ENCODE measurements at regions of chr9 and their contacts with region 1.

Region 1: DNA sequence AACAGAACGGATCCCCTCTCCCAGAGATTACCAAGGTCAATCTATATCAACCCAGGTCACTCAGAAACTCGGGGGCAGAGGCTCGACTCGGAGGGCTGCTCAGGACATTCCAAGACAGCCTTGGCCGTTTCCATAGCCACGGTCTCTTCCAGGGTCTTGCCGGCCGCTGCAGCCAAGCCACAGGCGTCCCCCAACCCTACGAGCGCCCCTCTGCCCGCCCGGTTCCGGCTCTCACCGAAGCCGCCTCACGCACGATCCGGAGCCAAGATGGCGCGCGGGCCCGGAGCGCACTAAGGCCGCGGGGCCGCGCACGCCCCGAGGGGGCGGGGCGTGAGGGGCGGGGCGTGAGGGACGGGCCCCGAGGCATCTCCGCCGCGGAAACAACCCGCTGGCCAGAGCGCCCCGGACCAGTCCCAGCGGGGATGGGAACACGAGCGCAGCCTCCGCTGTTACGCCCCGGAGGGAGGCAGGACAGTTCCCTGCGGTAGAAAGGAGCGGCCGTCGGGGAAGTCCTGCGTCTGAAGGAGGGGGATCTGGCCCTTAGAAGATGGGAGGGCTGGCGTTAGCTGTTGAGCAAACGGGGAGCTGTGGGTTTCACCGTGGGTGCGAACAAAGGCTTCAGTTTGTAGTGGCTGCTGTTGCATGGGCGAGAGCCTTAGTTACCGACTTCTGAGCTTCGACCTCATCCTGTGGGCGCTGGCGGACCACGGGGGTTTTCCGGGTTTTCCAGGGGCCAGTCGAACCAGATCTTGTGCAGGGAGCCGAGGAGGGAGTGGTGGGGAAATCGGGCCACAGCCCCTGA is at the start of gene RPP25L:
- DNase-seq: peak; percentile 49
- ATAC-seq: peak; percentile 89
- H3K4me3 ChIP-seq: peak within 1 kb of the TSS; percentile 87 to 95
- H3K27ac ChIP-seq: peak within 1 kb of the TSS; percentile 82
- H3K4me1 ChIP-seq: peaks cover 5 to 28% of the 10 kb centered on the region in 2 experiments
- H3K27me3 ChIP-seq: no peaks in the 10 kb centered on the region
- CTCF ChIP-seq: no peak
- POLR2A ChIP-seq: peak; percentile 87
- RAD21 ChIP-seq: no peak
- total RNA-seq, gene RPP25L: 51.1 TPM

Region 2: GRCh38 chr9:34637356-34638137 is 25.5 kb after region 1 on chr9 and contains the start of gene SIGMAR1:
- CTCF ChIA-PET with region 1: interaction called, 21 read pairs
- POLR2A ChIA-PET with region 1: interaction called, 6 read pairs
- RAD21 ChIA-PET with region 1: interaction called in 1 of 2 experiments, 3 read pairs
- intact Hi-C with region 1: loop called (anchors 1 kb)
- DNase-seq: peak; percentile 84
- ATAC-seq: peak; percentile 86
- H3K4me3 ChIP-seq: peak within 1 kb of the TSS; percentile 94
- H3K27ac ChIP-seq: peak within 1 kb of the TSS; percentile 85
- H3K4me1 ChIP-seq: peaks cover 15 to 38% of the 10 kb centered on the region in 2 experiments; a peak in 3 of 4 replicates
- H3K27me3 ChIP-seq: no peaks in the 10 kb centered on the region
- CTCF ChIP-seq: no peak
- POLR2A ChIP-seq: peak; percentile 92
- RAD21 ChIP-seq: no peak
- total RNA-seq, gene SIGMAR1: 109 TPM

Region 3: DNA sequence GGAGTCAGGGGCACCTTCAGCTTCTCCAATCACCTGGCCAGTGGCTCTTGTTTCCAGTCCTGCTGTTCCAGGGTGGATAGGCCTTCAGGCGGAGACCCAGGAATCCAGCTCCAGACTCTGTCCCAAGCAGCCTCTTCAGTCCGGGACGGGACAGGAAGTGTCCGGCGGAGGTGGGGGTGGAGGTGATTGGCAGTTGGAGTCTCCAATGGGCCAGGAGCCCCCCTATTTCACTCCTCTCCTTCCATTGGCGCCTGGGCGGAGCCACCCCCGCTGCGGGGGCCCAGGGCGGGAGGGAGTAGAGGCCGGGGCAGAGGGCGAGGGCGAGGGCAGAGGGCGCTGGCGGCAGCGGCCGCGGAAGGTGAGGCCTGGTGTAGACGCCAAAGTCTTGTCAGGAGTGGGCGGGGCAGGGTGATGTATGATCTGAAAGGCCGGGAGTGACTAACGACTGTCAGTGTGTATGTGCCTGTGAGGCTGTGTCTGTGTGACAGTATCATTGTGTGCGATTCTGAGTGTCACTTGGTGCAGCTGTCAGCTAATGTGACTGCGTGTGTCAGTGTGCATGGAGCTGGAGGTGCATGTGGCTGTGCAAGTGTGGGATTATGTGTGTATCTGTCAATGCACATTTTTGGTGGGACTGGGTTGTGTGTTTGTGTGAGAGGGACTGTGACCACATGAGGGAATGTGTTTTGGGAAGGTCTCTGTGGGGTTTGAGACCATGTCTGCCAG is 40.0 kb after region 1 on chr9 and contains the start of gene IL11RA:
- CTCF ChIA-PET with region 1: no interaction called
- POLR2A ChIA-PET with region 1: no interaction called
- RAD21 ChIA-PET with region 1: no interaction called
- intact Hi-C with region 1: no loop called
- DNase-seq: peak; percentile 80
- ATAC-seq: peak; percentile 94
- H3K4me3 ChIP-seq: peak within 1 kb of the TSS; percentile 58 to 61
- H3K27ac ChIP-seq: peak within 1 kb of the TSS; percentile 50
- H3K4me1 ChIP-seq: peaks cover 19 to 39% of the 10 kb centered on the region in 2 experiments
- H3K27me3 ChIP-seq: no peaks in the 10 kb centered on the region
- CTCF ChIP-seq: no peak
- POLR2A ChIP-seq: peak; percentile 45
- RAD21 ChIP-seq: no peak
- total RNA-seq, gene IL11RA: 10.6 TPM

Region 4: DNA sequence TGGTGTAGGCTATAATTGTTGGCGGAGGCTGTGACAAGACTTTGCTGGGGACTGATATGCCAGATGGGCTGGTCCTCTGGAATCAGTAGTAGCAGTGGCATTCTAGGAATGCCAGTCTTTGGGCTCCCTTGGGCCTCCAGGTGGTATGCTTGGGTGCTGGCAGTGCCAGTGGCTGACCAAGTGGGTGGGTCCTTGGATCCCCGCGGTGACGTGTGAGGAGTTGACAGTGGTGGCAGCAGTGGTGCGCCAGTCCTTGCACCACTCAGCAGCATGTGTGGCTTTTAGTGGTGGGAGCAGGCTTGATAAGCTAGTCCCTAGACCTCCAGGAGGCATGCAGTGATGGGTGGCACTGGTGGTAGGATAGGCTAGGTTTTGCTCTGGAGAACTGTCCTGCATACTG is 613.6 kb after region 1 on chr9:
- CTCF ChIA-PET with region 1: no interaction called
- POLR2A ChIA-PET with region 1: no interaction called
- RAD21 ChIA-PET with region 1: no interaction called
- intact Hi-C with region 1: no loop called
- DNase-seq: no peak
- ATAC-seq: no peak
- H3K4me3 ChIP-seq: no peak overlapping the region
- H3K27ac ChIP-seq: no peak overlapping the region
- H3K4me1 ChIP-seq: no peaks in the 10 kb centered on the region
- H3K27me3 ChIP-seq: no peaks in the 10 kb centered on the region
- CTCF ChIP-seq: no peak
- POLR2A ChIP-seq: no peak
- RAD21 ChIP-seq: no peak